ENCODE measurements at regions of chr11 and their contacts with region 1.

Region 1: DNA sequence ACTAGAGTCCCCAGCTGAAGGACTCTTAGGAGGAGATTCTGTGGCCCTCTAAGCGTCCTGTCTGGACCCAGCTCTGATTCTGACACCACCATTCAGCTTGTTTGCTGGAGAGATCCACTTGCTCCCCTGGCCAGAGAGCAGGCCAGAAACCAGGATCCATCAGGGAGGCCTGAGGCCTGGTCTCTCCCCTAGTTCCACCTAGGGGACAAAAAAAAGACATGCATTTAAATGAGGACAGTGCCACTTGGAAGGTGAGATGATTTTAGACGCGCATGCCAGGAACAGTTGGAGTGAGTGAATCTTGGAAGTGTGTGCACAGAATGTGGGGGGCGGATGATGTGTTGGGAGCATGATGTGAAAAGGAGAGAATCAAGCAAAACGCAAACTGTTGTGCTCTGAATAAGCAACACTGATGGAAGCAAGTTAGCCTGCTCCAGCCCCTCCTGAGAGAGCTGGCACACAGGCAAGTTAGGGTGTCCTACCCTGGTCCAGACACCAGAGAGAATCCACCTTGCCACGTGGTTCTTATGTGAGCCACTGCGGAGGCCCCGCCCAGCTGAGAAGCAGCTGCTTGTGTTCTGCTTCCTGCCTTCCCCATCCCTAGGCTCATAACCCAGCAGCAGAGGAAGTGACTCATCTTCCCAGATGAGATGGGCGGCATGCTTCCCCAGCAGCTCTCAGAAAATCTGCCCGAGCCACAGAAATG is 8.0 kb upstream of the SLCO2B1 start:
- DNase-seq: peak; percentile 92
- H3K4me3 Mint-ChIP-seq: no peak overlapping the region
- H3K27ac Mint-ChIP-seq: peak overlapping the region; percentile 86
- H3K4me1 Mint-ChIP-seq: peaks cover 27% of the 10 kb centered on the region
- H3K27me3 Mint-ChIP-seq: no peaks in the 10 kb centered on the region

Region 2: DNA sequence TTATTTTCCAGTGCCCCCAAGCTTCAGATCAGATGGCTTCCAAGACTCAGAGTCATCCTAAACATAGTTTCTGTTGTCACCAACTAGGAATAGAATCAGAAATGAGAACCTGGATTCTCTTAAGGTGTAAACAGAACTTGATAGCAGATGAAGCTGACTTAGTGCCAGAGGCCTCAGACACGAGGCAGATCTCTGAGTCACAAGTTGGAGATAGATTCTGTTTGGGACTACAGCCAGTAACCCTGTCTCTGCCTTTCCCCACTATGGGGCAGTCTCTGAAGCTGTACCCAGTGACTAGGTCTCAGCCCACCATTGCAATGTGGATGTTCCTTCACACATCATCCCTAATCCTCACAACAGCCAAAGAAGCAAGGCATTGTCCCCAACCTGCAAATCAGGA is 128.7 kb before region 1 on chr11:
- CTCF ChIA-PET with region 1: interaction called, 20 read pairs
- intact Hi-C with region 1: no loop called
- DNase-seq: no peak
- H3K4me3 Mint-ChIP-seq: no peak overlapping the region
- H3K27ac Mint-ChIP-seq: no peak overlapping the region
- H3K4me1 Mint-ChIP-seq: no peaks in the 10 kb centered on the region
- H3K27me3 Mint-ChIP-seq: no peaks in the 10 kb centered on the region

Region 3: DNA sequence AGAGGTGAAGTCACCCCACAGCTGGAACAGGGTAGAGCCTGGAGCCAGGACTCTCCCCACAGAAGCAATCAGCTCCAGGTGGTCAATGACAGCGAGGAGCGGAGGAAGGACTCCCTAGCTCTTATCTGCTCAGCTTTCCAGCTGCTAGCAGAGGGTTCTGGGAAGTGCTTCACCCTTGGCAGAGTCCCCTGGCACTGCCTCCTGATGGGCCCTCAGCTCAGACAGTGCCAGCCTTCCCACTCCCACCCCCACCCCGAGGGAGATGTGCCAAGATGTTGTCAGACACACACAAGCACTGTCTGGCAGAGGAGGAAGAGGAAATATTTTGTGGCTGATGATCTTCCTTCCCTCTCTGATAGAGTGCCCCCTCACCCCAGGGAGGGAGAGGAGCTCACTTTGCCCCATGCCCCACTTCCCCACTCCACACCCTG is 52.3 kb after region 1 on chr11:
- CTCF ChIA-PET with region 1: interaction called, 430 read pairs
- intact Hi-C with region 1: no loop called
- DNase-seq: no peak
- H3K4me3 Mint-ChIP-seq: no peak overlapping the region
- H3K27ac Mint-ChIP-seq: no peak overlapping the region
- H3K4me1 Mint-ChIP-seq: no peaks in the 10 kb centered on the region
- H3K27me3 Mint-ChIP-seq: no peaks in the 10 kb centered on the region

Region 4: DNA sequence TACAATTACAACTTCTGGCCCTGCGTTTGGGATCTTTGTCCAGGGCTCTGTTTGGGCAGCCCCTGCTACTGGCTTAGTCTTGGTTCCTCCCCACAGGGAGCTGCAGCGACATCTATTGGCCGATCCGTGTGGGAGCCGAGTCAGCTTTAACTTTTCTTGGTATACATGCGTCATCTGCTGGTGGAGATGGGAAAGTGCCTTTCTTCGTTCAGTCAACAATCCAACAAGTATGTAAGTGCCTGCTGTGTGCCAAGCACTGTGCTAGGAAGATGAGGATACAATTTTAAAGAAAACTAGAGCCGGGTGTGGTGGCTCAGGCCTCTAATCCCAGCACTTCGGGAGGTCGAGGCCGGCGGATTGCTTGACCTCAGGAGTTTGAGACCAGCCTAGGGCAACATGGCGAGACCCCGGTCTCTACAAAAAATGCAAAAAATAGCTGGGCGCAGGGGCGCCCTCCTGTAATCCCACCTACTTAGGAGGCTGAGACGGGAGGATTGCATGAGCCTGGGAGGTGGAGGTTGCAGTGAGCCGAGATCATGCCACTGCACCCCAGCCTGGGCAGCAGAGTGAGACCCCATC is 105.9 kb after region 1 on chr11:
- CTCF ChIA-PET with region 1: interaction called, 445 read pairs
- intact Hi-C with region 1: loop called (anchors 1 kb)
- DNase-seq: peak; percentile 95
- H3K4me3 Mint-ChIP-seq: no peak overlapping the region
- H3K27ac Mint-ChIP-seq: no peak overlapping the region
- H3K4me1 Mint-ChIP-seq: no peaks in the 10 kb centered on the region
- H3K27me3 Mint-ChIP-seq: peaks cover 3% of the 10 kb centered on the region

Region 5: DNA sequence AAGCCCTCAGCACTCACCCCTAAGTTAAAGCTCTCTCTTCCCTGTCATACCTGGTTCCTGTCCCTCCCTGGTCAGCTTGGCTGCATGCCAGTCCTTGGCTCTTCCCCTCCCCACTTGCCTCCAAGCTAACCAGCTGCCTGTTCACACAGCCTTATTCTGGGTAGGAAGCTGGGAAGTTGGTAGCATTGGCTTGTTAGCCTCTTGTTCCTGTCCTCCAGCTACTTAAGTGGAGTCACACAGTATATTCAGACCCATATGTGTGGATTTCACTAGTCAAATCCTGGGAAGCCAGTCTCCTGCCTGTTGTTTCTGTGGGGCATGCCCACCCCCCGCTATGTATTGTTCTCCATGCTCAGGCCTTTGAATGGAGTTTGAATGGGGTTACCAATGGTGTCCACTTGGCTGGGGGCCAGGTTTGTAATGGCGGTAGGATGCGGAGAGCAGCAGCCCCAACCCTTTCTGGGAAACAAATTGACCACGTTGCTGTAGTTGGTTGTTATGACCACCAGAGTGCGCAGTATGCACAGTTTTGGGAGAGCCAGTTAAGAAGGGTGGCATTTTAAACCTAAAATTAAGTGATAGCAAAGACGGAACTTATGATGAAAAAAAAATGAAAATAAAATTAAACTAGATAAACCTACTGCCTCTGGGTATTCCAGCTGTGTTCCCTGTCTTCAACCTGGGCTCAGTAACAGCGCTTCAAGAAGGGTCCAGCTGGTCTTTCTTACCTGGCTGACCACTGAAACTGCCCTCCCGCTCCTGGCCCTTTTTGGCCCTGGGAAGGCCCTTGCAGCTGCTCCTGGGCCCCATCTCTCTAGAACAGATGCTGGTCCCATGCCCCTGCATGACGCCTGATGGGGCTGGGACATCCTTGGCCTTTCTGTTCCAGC is 245.8 kb after region 1 on chr11:
- CTCF ChIA-PET with region 1: interaction called, 7 read pairs
- intact Hi-C with region 1: loop called (anchors 5 kb)
- DNase-seq: peak; percentile 88
- H3K4me3 Mint-ChIP-seq: no peak overlapping the region
- H3K27ac Mint-ChIP-seq: no peak overlapping the region
- H3K4me1 Mint-ChIP-seq: peaks cover 11% of the 10 kb centered on the region
- H3K27me3 Mint-ChIP-seq: no peaks in the 10 kb centered on the region

Region 6: DNA sequence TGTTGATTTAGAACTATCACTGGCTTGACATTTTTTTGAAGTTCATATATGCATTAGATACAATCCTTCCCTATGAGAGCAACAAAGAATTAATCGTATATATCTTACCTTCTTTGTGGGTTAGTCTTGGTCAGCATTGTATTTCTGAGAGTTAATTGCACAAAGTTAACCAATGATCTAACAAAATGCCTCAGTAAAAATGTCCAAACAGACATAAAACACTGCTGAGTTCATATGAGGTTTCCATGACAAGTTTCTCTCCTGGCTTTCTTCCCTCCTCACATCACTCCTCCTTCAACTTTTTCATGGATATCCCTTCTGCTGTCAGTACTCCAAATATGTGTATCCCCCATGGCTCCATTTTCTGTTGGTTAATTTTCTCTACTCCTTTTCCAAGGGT is 517.0 kb after region 1 on chr11:
- CTCF ChIA-PET with region 1: no interaction called
- intact Hi-C with region 1: no loop called
- DNase-seq: no peak
- H3K4me3 Mint-ChIP-seq: no peak overlapping the region
- H3K27ac Mint-ChIP-seq: no peak overlapping the region
- H3K4me1 Mint-ChIP-seq: peaks cover 2% of the 10 kb centered on the region
- H3K27me3 Mint-ChIP-seq: peaks cover 27% of the 10 kb centered on the region

Measured in activated naive CD4-positive, alpha-beta T cell treated with anti-CD3 and anti-CD28 coated beads for 36 hours (primary cell).